Breast epithelium (tissue), 4 donors: ENCODE measurements at regions of chr9 and their contacts with region 1.

Region 1: GRCh38 chr9:135770203-135770535 is 68.2 kb downstream of the KCNT1 start:
- DNase-seq: no peak
- H3K4me3 ChIP-seq: no peak overlapping the region
- H3K27ac ChIP-seq: no peak overlapping the region
- H3K4me1 ChIP-seq: no peaks in the 10 kb centered on the region
- H3K27me3 ChIP-seq: peaks cover 0 to 42% of the 10 kb centered on the region in 2 donors
- CTCF ChIP-seq: no peak
- POLR2A ChIP-seq: no peak

Region 2: DNA sequence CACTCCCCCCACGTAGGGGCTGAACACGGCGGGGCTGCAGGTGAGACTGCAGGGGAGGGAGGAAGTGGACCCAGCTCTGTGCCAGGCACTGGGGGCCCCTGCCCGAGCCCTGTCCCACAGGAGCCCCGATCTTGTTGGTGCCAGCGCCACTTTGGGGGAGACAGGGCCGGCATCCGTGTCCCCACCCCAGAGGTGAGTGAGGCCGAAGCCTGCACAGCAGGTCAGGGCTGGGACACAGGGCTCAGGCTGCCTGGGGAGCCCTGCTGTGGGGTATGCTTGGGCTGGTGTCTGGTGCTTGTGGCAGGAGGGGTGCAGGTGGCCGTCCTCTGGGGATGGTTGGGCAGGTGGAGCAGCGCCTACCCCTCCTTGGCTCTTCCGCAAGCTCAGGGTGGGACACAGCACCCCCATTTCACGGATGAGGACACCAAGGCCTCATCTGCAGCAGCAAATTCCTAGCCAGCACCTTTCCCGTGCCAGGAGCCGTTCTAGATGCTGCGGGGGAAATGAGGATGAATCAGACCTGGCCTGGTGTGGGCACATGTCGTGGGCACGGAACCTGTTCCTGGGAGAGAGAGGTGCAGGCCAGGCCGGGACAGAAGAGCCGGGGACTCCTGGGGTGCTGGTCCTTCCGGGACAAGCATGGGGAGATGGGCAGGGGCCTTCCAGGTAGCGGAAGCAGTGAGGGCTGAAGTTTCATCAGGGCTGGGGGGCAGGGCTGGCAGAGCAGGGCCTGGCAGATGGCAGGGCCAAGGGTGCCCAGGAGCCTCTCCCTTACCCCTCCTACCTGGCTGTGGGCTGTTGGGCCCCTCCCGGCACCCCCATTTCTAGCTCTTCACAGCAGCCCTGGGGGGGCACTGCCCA is 33.0 kb before region 1 on chr9:
- intact Hi-C with region 1: loop called (anchors 1 kb)
- DNase-seq: no peak
- H3K4me3 ChIP-seq: no peak overlapping the region
- H3K27ac ChIP-seq: no peak overlapping the region
- H3K4me1 ChIP-seq: no peaks in the 10 kb centered on the region
- H3K27me3 ChIP-seq: peaks cover 0 to 86% of the 10 kb centered on the region in 2 donors
- CTCF ChIP-seq: no peak
- POLR2A ChIP-seq: no peak

Region 3: DNA sequence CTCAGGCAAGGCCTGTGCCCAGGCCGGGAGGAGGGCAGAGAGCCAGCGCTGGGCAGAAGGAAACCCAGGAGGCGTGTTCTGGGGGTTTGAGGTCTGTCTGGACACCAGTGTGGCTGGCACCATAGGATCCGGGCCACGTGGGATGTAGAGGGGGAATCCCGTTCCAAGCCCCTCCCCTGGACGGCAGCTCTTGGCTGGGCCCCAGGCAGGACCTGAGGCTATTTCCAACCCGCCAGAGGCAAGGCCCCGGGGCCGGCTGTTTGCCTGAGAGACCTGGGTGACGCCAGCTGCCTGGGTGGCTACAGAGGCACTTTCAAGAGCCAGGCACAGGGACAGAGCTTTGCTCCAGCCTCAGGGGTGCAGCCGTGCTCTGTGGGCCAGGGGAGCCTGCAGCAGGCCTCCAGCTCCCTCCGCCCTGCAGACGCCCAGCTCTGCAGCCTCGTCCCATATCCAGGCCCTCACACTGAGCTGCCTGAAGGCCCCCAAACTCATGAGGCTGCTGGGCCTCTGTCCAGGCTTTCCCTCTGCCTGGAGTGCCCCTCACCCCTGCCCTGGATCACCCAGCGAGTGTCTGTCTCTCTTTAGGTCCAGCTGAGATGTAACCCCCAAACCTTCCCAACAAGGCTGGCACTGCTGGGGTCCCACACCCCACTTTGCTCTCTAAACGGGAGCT is 836.0 kb after region 1 on chr9:
- intact Hi-C with region 1: no loop called
- DNase-seq: no peak
- H3K4me3 ChIP-seq: no peak overlapping the region
- H3K27ac ChIP-seq: no peak overlapping the region
- H3K4me1 ChIP-seq: no peaks in the 10 kb centered on the region
- H3K27me3 ChIP-seq: peaks cover 0 to 28% of the 10 kb centered on the region in 2 donors
- CTCF ChIP-seq: no peak
- POLR2A ChIP-seq: no peak